ENCODE measurements at regions of chr11 and their contacts with region 1.

Region 1: DNA sequence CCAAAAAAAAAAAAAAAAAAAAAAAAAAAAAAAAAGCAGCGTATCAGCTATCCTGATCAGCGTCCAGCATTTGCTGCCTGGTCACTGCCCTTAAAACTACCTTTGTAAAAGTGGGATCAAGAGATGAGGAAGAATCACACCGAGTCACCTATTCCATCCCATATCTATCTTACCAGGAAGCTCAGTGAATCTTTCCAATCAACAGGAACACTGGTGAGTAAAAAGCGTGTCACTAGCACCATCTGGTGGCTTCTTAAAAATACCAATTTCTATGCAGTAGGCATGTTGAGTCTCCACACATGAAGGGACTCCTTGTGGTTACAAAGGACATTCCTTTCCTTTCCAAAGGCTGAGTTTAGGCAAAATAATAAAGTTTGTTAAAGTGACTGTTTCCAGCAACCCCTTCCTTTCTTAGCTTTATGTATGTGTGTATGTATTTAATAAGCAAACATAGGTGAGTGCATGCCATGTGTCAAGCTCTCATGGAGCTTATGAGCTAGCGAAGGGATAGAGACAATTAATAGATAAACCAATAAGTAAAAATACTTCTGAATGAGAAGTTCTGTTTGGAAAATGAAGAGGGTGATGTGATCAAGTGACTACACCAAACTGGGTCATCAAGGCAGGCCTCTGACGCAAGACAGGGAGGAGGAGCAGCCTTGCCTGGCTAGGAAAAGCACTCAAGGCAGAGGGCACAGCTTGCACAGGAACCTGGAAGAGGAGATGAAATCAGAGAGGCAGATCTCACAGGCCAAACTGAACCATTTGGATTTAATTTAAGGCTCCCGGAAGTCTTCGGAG is 13.9 kb upstream of the TP53AIP1 start:
- DNase-seq: no peak
- H3K4me3 ChIP-seq: no peak overlapping the region
- H3K27ac ChIP-seq: no peak overlapping the region
- H3K4me1 ChIP-seq: peaks cover 0 to 8% (median 2%) of the 10 kb centered on the region in 6 donors
- H3K27me3 ChIP-seq: peaks cover 0 to 8% (median 0%) of the 10 kb centered on the region in 7 donors
- CTCF ChIP-seq: peak; percentile 49 to 84 (median 70)
- POLR2A ChIP-seq: no peak

Region 2: DNA sequence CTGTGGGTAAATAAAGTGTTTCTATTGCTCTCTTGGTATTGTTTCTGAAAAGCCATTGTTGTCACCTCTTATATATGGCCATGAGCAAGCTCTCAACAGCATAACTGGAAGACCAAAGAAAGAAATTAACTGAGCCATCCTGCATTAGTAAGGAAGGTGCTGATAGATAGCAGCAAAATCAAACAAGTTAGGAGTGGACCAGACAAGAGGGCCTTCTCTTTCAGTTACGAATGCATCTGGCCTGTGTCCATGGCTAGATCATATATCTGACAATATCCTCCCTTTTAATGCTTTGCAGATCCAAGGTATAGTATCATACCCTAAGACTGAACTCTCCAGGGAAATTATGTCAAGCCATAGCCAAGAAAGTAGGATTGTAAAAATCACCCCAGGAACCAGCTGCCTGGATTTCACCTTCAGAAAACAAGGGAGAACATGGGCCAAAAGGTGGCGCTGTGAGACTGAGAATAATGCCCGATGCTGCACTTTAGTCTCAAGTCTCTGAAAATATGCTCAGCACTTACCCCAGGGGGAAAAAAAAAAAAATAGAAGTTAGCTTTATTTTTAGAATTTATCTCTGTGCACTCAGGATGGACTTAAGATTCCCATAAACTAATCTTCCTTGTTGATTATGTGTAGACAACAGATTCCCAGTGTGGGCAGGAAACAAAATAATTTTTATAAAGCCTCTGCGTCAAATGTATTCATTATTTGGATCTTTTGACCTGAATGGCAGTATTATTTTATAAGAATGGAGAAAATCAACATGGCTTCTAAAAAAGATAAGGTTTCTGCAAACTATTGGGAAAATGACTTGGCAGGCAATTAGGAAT is 784.3 kb before region 1 on chr11:
- intact Hi-C with region 1: loop called (anchors 10 kb)
- DNase-seq: peak; percentile 89
- H3K4me3 ChIP-seq: no peak overlapping the region
- H3K27ac ChIP-seq: peak overlapping the region in 1 of 8 donors; percentile 6
- H3K4me1 ChIP-seq: peaks cover 0 to 13% (median 10%) of the 10 kb centered on the region in 6 donors
- H3K27me3 ChIP-seq: no peaks in the 10 kb centered on the region
- CTCF ChIP-seq: peak; percentile 65 to 91 (median 81)
- POLR2A ChIP-seq: no peak

Region 3: DNA sequence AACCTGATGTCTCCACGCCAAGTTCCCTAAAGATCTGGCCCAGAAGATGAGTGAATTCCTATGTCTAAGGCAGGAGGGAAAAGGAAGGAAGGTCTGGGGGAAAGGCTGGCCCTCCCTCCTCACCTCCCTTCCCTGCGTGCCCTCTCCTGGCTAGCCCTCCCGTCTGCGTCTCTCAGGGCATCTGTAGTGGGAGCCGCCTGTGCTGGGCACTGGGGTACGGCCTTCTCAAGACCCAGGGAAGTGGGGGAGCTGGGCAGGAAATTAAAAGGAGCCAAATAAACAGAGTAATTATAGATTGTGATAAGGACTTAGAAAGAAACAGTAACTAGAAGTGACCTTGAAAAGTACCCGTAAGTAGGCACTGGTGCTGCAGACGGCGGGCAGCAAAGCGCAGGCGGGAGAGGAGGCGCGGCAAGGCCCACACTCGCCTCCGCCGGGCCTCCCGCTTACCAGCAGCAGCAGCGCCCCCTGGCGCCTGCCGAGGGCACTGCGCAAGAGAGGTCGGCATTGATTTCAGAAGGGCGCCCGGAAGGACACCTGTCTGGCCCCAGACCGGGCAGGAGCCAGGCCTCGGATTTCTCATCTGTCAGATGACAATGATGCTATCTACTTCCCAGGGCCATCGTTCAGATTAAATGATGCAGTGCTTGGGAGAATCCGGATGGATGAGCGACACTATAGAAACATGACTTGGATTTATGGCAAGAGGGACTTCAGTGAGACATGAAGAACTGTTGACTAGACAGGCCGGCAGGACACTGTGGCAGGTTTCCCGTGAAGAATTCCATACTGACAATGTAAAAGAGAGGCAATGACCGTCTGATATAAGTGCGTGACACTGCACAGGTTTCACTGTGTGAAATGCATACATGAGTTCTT is 96.8 kb before region 1 on chr11:
- intact Hi-C with region 1: no loop called
- DNase-seq: peak; percentile 96
- H3K4me3 ChIP-seq: no peak overlapping the region
- H3K27ac ChIP-seq: peak overlapping the region in 5 of 8 donors; percentile 28 to 55 (median 44)
- H3K4me1 ChIP-seq: peaks cover 0 to 28% (median 19%) of the 10 kb centered on the region in 6 donors
- H3K27me3 ChIP-seq: no peaks in the 10 kb centered on the region
- CTCF ChIP-seq: peak; percentile 81 to 99 (median 94)
- POLR2A ChIP-seq: no peak

Region 4: GRCh38 chr11:128884703-128885338 is 71.8 kb before region 1 on chr11:
- intact Hi-C with region 1: loop called (anchors 2 kb)
- DNase-seq: no peak
- H3K4me3 ChIP-seq: no peak overlapping the region
- H3K27ac ChIP-seq: no peak overlapping the region
- H3K4me1 ChIP-seq: peaks cover 0 to 19% (median 0%) of the 10 kb centered on the region in 6 donors
- H3K27me3 ChIP-seq: peaks cover 0 to 81% (median 2%) of the 10 kb centered on the region in 7 donors
- CTCF ChIP-seq: peak; percentile 63 to 87 (median 78)
- POLR2A ChIP-seq: no peak